ENCODE measurements at regions of chr9 and their contacts with region 1.

Region 1: DNA sequence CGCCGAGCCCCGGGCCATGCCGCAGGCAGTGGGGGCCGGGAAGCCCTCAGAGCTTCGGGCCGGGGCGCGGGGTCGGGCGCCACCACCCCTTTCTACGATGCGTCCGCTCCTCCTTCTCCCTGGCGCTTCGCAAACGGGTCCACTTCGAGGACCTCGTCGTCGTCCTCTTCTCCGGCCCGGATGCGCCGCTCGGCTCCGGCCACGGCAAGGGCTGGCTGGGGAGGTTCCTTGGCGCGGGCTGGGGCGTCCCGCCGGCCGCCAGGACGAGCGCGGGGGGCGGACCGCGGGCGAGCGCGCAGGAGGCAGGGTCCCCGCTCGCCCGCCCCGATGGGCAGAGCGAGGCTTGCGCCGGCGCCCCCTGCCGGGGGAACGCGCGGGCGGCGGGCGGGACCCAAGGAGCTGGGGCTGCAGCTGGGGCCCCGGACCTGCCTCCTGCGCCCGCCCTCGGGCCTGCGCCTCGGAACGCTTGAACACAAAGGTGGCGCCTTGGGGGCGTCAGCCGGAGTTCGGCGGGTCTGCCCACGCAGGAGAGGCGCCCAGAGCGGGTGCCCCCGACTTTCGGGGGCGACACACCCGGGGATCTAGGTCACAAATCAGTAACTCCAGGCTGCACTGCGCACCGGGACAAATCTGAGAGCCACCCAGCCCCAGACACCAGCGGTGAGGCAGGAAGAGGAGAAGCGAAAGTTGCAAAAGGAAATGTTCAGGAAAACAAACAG is at the start of gene ROR2:
- DNase-seq: no peak
- H3K4me3 ChIP-seq: no peak within 1 kb of the TSS
- H3K27ac ChIP-seq: no peak within 1 kb of the TSS
- H3K4me1 ChIP-seq: no peaks in the 10 kb centered on the region
- H3K27me3 ChIP-seq: peaks cover 33% of the 10 kb centered on the region
- CTCF ChIP-seq: no peak
- total RNA-seq, gene ROR2: not detected in 2 replicates

Region 2: DNA sequence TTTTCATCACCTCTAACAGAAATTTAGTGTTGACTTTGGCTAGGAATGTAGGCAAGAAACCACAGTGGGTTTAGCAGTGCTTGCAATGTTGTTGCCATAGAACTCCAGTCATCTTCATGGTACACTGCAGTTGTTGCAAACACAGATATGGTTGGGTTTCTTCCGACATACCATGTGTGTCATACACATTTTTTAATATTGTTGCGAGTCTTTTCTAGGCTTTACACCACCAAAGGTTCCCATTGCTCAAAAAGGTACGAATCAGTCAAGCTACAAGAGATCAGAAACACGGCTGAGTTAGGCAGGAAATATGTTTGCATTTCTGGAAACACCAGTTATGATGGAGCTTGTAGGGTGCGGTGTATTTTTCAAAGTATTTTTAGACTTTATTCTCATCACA is 976.1 kb before region 1 on chr9:
- CTCF ChIA-PET with region 1: interaction called, 22 read pairs
- POLR2A ChIA-PET with region 1: no interaction called
- intact Hi-C with region 1: no loop called
- DNase-seq: peak in 1 of 2 experiments; percentile 49
- H3K4me3 ChIP-seq: no peak overlapping the region
- H3K27ac ChIP-seq: no peak overlapping the region
- H3K4me1 ChIP-seq: 0 out of 2 replicates have a peak, but pooled peaks cover 4% of the 10 kb centered on the region
- H3K27me3 ChIP-seq: no peaks in the 10 kb centered on the region
- CTCF ChIP-seq: no peak

Region 3: GRCh38 chr9:91775011-91775707 is 174.9 kb before region 1 on chr9:
- CTCF ChIA-PET with region 1: no interaction called
- POLR2A ChIA-PET with region 1: no interaction called
- intact Hi-C with region 1: loop called (anchors 10 kb)
- DNase-seq: peak in 1 of 2 experiments; percentile 50
- H3K4me3 ChIP-seq: no peak overlapping the region
- H3K27ac ChIP-seq: no peak overlapping the region
- H3K4me1 ChIP-seq: no peaks in the 10 kb centered on the region
- H3K27me3 ChIP-seq: peaks cover 85% of the 10 kb centered on the region
- CTCF ChIP-seq: peak; percentile 89